Testis (tissue), 5 donors: ENCODE measurements at regions of chr20 and their contacts with region 1.

Region 1: DNA sequence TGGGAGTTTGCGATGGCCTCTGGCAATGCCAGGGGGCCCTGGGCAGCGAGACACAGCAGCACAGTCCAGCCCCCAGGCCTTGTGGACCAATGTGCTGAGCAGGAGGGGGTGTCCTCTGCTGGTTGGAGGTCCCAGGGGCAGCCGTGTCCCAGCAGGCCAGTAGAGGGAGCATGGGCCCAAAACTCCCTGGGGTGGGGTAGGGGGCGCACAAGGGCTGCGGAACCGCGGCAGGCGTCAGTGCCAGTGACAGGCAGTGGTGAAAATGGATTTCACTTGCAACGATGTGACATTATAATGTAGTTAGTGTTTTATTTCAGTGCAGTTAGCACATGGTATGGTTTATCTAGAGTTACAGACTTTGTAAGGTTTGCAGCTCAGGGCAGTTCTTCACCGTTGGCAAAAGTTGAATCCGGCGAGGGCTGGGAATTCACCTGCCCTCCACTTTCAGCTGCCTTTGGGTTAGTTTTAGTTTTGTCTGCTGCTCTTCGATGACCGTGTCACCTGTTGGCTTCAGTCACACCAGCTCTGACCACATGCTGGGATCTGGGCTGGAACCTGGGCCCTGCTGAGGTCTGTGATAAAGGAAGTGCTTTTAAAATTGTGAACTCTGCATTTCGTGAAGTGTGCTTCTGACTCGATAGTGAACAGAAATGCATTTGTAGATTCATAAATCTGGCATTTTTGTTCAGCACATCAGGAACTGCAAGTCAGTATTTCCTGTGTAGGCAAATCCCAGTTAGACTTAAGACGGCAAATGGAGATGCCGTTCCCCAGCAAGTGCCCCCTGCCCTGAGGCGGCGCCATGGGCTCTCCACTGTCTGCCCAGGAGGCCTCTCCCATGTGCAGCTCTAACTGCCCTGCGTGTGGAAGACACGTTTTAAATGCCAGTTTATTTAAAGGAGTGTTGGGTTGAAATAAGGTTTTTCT is 46.8 kb downstream of the PYGB start:
- DNase-seq: no peak
- H3K4me3 ChIP-seq: no peak overlapping the region
- H3K27ac ChIP-seq: peak overlapping the region in 1 of 2 donors; percentile 28
- H3K4me1 ChIP-seq: peaks cover 28% of the 10 kb centered on the region
- H3K27me3 ChIP-seq: no peaks in the 10 kb centered on the region
- CTCF ChIP-seq: peak in 2 of 3 experiments; percentile 39 to 53
- POLR2A ChIP-seq: no peak

Region 2: GRCh38 chr20:25017257-25018115 is 277.2 kb before region 1 on chr20:
- intact Hi-C with region 1: no loop called
- DNase-seq: no peak
- H3K4me3 ChIP-seq: no peak overlapping the region
- H3K27ac ChIP-seq: no peak overlapping the region
- H3K4me1 ChIP-seq: peaks cover 2% of the 10 kb centered on the region
- H3K27me3 ChIP-seq: no peaks in the 10 kb centered on the region
- CTCF ChIP-seq: no peak
- POLR2A ChIP-seq: no peak

Region 3: DNA sequence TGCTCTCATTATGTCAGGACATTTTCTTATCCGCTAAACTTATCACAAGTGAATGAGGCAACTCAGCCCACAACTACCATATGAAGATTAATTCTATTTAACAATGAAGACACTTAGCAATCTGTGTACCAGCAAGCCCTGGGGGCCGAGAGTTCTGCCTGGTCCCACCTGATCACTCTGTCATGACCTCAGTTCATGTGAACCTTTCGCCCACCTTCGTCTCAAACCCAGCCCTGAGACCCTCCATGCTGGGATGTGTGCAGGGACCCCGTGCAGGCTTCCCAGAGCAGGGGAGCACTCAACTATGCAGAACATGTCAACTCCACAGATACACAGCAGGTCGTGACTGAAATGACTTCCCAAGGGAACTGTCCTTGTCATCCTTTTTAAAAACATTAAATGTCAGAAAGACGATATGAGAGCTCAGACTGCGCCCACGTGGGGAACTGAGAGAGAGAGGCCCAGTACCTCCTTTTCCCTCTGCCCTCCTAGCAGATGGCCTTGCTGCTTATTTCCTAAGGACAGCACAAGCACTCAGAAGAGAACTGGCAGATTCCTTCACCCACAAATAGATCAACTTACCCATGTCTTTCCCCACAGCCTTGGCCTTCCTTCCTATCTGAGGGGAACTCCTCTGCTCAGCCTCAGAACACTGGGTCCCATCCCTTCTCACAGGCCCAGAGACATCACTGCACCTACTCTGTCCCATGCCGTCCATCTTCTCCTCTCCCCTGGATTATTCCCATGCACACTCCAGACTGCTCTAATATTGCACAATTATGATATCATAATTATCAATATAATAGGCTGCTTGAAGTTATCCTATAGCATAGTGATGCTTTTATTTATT is 84.4 kb after region 1 on chr20:
- intact Hi-C with region 1: no loop called
- DNase-seq: no peak
- H3K4me3 ChIP-seq: no peak overlapping the region
- H3K27ac ChIP-seq: no peak overlapping the region
- H3K4me1 ChIP-seq: no peaks in the 10 kb centered on the region
- H3K27me3 ChIP-seq: no peaks in the 10 kb centered on the region
- CTCF ChIP-seq: no peak
- POLR2A ChIP-seq: no peak

Region 4: DNA sequence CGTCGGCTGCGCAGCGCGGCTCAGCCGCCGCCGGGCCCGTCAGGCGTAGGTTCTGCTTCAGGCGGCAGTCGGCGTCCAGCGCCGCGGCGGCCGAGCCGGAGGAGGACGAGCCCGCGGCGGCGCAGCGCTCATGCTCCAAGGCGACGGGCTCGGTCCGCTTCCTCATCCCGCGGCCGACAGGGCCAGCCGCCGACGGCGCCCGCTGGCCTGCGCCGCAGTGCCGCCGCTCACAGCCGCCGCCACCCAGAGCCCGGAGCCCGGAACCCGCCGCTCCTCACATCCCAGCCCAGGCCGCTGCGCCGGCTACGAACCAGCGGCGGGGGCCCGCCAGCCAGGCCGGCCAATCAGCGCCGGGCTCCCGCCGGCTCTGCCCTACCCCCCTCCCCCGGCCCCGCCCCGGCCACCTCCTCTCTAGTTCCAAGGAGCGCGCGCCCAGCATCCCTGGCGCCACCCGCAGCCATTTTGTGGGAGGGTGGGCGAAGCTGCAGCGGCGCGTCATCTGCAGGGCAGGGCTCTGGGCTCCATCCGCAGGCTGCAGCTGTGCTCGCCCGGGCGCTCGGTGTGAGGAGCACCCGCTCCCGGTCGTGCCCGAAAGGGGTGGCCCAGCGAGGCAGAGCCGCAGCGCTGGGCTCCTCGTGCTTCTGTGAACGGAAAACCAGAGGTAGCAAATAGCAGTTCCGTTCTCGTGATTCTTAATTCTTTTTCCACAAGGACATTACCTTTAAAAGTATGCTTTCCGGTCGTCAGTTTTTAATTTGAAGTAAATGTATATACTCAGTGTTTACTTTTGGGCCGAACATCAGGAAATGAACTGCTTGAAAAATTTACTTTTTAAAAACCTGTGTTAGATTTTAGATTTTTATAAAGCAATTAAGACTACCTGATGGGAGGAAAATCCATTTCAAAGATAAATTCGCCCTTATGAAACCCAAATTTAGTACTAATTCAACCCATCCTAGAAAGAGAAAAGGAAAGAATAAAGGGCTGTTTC is 96.1 kb after region 1 on chr20 and contains the start of gene ABHD12:
- intact Hi-C with region 1: loop called (anchors 10 kb)
- DNase-seq: peak; percentile 97
- H3K4me3 ChIP-seq: peak within 1 kb of the TSS; percentile 74 to 86
- H3K27ac ChIP-seq: peak within 1 kb of the TSS; percentile 84 to 86
- H3K4me1 ChIP-seq: peaks cover 6% of the 10 kb centered on the region
- H3K27me3 ChIP-seq: no peaks in the 10 kb centered on the region
- CTCF ChIP-seq: no peak
- POLR2A ChIP-seq: no peak
- total RNA-seq, gene ABHD12: 47.5 to 51.5 TPM

Region 5: GRCh38 chr20:25623736-25624499 is 329.2 kb after region 1 on chr20 and contains the start of gene NANP:
- intact Hi-C with region 1: no loop called
- DNase-seq: peak; percentile 98
- H3K4me3 ChIP-seq: peak within 1 kb of the TSS; percentile 71 to 93
- H3K27ac ChIP-seq: peak within 1 kb of the TSS; percentile 67 to 89
- H3K4me1 ChIP-seq: peaks cover 11% of the 10 kb centered on the region
- H3K27me3 ChIP-seq: no peaks in the 10 kb centered on the region
- CTCF ChIP-seq: peak in 1 of 3 experiments; percentile 14
- POLR2A ChIP-seq: no peak
- total RNA-seq, gene NANP: 6.3 to 6.9 TPM